Adrenal gland (tissue), 19 donors: ENCODE measurements at regions of chr5 and their contacts with region 1.

Region 1: DNA sequence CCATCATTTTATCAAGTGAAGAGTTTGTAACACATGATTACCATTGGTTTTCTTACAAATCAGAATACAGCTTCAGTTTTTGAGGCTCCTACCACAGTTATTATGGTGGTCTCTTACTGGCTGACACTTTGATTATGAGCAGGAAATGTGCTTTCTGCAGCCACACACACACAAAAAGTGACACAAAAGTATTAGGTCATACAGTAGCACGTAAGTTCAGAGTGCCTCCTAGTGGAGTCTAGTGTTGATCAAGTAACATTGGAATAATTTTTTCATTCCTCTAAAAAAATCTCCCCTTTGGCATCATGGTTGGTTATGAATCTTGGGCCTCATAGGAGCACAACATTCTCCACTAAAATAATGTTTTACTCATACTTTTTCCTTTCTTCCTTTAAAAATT is 37.6 kb downstream of the PAM start:
- DNase-seq: no peak
- H3K4me3 ChIP-seq: no peak overlapping the region
- H3K27ac ChIP-seq: no peak overlapping the region
- H3K4me1 ChIP-seq: peaks cover 0 to 33% of the 10 kb centered on the region in 2 donors
- H3K27me3 ChIP-seq: no peaks in the 10 kb centered on the region
- CTCF ChIP-seq: peak in 3 of 6 experiments; percentile 21 to 32 (median 29)
- POLR2A ChIP-seq: no peak

Region 2: GRCh38 chr5:102715082-102715819 is 77.5 kb before region 1 on chr5:
- intact Hi-C with region 1: no loop called
- DNase-seq: peak in 4 of 7 donors; percentile 13 to 37 (median 24)
- H3K4me3 ChIP-seq: no peak overlapping the region
- H3K27ac ChIP-seq: no peak overlapping the region
- H3K4me1 ChIP-seq: peaks cover 0 to 8% of the 10 kb centered on the region in 2 donors
- H3K27me3 ChIP-seq: no peaks in the 10 kb centered on the region
- CTCF ChIP-seq: no peak
- POLR2A ChIP-seq: no peak

Region 3: DNA sequence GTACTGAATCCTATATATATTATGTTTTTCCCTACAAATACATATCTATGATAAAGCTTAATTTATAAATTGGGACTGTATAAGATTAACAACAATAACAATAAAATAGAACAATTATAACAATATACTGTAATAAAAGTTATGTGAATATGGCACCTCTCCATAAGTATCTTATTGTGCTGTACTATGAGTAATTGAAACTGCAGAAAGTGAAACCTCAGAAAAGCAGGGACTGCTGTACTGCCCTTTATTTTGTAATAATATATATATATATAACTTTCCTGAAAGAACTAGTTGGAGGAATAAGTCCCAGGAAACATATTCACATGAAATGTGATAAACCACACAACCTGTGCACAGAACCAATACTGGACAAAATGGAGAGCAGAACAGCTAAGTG is 39.7 kb after region 1 on chr5:
- intact Hi-C with region 1: no loop called
- DNase-seq: no peak
- H3K4me3 ChIP-seq: no peak overlapping the region
- H3K27ac ChIP-seq: no peak overlapping the region
- H3K4me1 ChIP-seq: peaks cover 0 to 15% of the 10 kb centered on the region in 2 donors
- H3K27me3 ChIP-seq: no peaks in the 10 kb centered on the region
- CTCF ChIP-seq: no peak
- POLR2A ChIP-seq: no peak

Region 4: DNA sequence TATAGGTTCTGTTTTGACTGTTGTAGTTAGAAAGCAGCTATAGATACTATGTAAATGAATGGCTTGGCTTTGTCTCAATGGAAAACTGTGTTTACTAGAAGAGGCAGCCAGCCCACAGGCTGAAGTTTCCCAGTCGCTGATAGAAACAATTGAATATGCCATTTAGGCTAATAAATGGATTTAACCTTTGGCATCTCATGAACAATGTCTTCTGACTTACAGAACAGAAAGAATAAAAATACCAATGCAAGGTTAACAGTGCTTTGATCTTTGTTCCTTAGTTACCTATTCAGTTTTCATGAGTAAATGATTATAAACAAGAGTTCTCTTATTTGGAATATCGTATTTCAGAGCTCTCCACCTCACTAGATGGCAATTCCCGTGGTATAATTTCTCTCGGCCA is 83.0 kb after region 1 on chr5:
- intact Hi-C with region 1: loop called in 1 of 2 experiments (anchors 10 kb)
- DNase-seq: no peak
- H3K4me3 ChIP-seq: no peak overlapping the region
- H3K27ac ChIP-seq: peak overlapping the region in 2 of 5 donors; percentile 3 to 7
- H3K4me1 ChIP-seq: peaks cover 16 to 22% of the 10 kb centered on the region in 2 donors
- H3K27me3 ChIP-seq: no peaks in the 10 kb centered on the region
- CTCF ChIP-seq: no peak
- POLR2A ChIP-seq: no peak